ENCODE measurements at regions of chr7 and their contacts with region 1.

Region 1: GRCh38 chr7:149670288-149670687 is 103.1 kb downstream of the ZNF467 start:
- DNase-seq: no peak
- ATAC-seq: no peak
- H3K4me3 Mint-ChIP-seq: no peak overlapping the region
- H3K27ac Mint-ChIP-seq: no peak overlapping the region
- H3K4me1 Mint-ChIP-seq: peaks cover 2% of the 10 kb centered on the region; the same call in 1 of the 2 replicates
- H3K27me3 Mint-ChIP-seq: no peaks in the 10 kb centered on the region; the same call in 1 of the 2 replicates
- CTCF ChIP-seq: no peak

Region 2: GRCh38 chr7:149707448-149707886 is 37.2 kb after region 1 on chr7:
- CTCF ChIA-PET with region 1: interaction called, 29 read pairs
- POLR2A ChIA-PET with region 1: no interaction called
- DNase-seq: no peak
- ATAC-seq: no peak
- H3K4me3 Mint-ChIP-seq: no peak overlapping the region
- H3K27ac Mint-ChIP-seq: no peak overlapping the region
- H3K4me1 Mint-ChIP-seq: peaks cover 24% of the 10 kb centered on the region
- H3K27me3 Mint-ChIP-seq: peaks cover 12% of the 10 kb centered on the region
- CTCF ChIP-seq: no peak

Measured in WTC11 (cell line).